ENCODE measurements at regions of chr17 and their contacts with region 1.

Region 1: GRCh38 chr17:41347869-41348773 is 2.5 kb downstream of the KRT33A start:
- DNase-seq: no peak
- ATAC-seq: no peak
- H3K4me3 ChIP-seq: no peak overlapping the region
- H3K27ac ChIP-seq: no peak overlapping the region
- H3K4me1 ChIP-seq: no peaks in the 10 kb centered on the region
- H3K27me3 ChIP-seq: no peaks in the 10 kb centered on the region
- CTCF ChIP-seq: no peak

Region 2: DNA sequence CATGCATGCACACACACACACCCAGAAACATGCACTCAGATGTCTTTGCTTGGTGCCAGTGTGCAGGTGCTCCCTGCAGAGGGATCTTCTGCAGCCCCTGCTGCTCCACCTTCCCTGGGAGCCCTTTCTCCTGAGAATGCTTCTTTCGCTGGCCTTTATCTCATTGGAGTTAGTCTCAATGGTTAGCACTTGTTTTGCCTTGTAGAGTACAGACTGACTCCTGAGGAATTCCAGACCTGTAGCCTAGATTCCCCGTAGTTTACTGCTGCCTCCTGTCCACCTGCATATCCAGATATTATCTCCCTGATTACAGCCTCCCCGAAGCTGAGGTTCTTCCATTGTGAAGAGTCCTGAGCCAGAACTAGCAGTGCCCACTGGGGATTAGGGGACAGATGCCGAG is 478.0 kb before region 1 on chr17:
- CTCF ChIA-PET with region 1: no interaction called
- POLR2A ChIA-PET with region 1: interaction called, 17 read pairs
- in situ Hi-C with region 1: no loop called
- intact Hi-C with region 1: no loop called
- DNase-seq: no peak
- ATAC-seq: no peak
- H3K4me3 ChIP-seq: no peak overlapping the region
- H3K27ac ChIP-seq: no peak overlapping the region
- H3K4me1 ChIP-seq: no peaks in the 10 kb centered on the region
- H3K27me3 ChIP-seq: no peaks in the 10 kb centered on the region; the same call in 1 of the 2 replicates
- CTCF ChIP-seq: no peak

Measured in Panc1 (cell line).